Right ventricle myocardium inferior (tissue), 1 donor: ENCODE measurements at regions of chr6 and their contacts with region 1.

Region 1: GRCh38 chr6:121838842-121839241 is 403.4 kb downstream of the GJA1 start:
- DNase-seq: no peak
- ATAC-seq: peak; percentile 95

Region 2: DNA sequence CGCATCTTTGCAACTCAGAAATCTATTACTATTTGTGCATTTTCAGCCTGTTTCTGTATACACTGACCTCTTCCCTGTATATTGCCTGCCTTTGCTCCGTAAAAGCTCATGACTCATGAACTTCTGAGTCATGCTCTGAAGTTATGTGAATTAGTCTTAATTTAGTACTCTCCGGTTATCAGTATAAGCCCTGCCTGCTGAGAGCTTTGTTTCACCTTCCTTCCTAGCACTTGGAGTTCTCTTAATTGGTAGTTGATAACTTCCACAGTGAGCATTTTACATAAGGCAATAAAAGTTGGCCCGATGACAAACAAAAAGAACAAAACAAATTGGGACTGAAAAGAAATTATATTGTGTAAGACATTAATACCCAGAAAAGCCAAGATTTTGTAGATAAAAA is 172.0 kb before region 1 on chr6:
- intact Hi-C with region 1: loop called (anchors 5 kb)
- DNase-seq: no peak
- ATAC-seq: peak; percentile 84

Region 3: DNA sequence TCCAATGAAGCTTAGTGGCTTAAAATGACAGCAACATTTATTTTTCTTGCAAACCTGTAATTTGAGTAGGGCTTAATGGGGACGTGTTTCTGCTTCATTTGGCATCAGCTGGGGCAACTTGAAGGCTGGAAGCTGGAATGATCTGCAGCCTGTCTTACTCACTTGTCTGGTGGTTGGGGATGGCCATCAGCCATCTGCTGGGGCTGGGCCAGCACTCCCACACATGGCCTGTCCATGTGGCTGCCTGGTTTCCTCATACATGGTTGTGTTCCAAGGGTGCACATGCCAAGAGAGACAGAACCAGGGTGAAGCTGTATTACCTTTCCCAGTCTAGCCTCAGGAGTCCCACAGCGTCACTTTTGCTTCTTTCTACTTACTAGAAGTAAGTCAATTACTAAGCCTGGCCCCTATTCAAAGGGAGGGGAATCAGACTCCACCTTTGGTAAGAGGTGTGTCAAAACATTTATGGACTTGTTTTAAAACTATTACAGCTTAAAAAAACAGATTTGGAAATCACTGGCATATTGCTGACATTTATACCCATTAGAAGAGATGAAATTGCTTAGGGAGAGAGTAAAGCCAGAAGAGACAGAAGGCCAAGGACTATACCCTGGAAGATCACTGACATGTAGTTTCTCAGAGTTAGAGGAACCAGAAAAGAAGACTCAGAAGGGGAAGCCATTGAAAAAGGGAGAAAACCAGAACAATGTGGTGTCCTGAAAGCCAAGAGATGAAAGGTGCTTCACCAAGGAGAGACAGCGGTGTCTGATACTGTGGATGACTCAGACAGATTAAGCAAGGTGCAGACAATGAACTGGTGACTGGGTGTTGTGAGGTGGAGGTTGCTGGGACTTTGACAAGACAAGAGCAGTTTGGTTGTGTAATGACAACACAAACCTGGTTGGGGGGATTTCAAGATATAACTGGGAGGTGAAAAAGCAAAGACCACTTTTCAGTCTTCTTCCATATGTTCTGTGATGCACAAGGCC is 58.2 kb before region 1 on chr6:
- intact Hi-C with region 1: loop called (anchors 2 kb)
- DNase-seq: peak; percentile 80
- ATAC-seq: peak; percentile 94